Ascending aorta (tissue), 2 donors: ENCODE measurements at regions of chr2 and their contacts with region 1.

Region 1: DNA sequence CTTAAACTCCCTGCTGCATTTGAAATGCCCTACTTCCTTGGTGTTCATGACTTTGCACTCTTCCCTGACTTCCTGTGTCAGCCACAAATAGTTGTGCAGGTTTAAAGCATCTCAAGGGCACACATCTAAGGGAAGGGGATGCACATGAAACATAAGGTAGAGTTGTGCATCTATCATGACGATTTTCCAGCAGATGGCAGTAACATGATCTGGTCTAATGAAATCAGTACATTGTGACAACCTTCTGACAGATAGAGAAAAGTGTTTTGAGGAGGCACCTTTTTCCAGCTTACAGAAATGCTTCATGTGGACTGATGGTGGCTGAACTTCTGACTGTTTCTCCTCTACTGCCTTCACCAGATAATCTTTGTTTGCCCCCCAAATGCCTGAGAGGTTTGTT is 238.9 kb downstream of the XIRP2 start:
- DNase-seq: no peak
- H3K4me3 ChIP-seq: no peak overlapping the region
- H3K27ac ChIP-seq: no peak overlapping the region
- H3K4me1 ChIP-seq: no peaks in the 10 kb centered on the region
- H3K27me3 ChIP-seq: no peaks in the 10 kb centered on the region
- CTCF ChIP-seq: no peak

Region 2: GRCh38 chr2:167212014-167212648 is 85.0 kb after region 1 on chr2:
- intact Hi-C with region 1: loop called (anchors 5 kb)
- DNase-seq: no peak
- H3K4me3 ChIP-seq: no peak overlapping the region
- H3K27ac ChIP-seq: no peak overlapping the region
- H3K4me1 ChIP-seq: peaks cover 0 to 3% of the 10 kb centered on the region in 2 donors
- H3K27me3 ChIP-seq: no peaks in the 10 kb centered on the region
- CTCF ChIP-seq: peak; percentile 33 to 72 (median 64)